Activated CD8-positive, alpha-beta T cell treated with anti-CD3 and anti-CD28 coated beads for 36 hours (primary cell): ENCODE measurements at regions of chr1 and their contacts with region 1.

Region 1: DNA sequence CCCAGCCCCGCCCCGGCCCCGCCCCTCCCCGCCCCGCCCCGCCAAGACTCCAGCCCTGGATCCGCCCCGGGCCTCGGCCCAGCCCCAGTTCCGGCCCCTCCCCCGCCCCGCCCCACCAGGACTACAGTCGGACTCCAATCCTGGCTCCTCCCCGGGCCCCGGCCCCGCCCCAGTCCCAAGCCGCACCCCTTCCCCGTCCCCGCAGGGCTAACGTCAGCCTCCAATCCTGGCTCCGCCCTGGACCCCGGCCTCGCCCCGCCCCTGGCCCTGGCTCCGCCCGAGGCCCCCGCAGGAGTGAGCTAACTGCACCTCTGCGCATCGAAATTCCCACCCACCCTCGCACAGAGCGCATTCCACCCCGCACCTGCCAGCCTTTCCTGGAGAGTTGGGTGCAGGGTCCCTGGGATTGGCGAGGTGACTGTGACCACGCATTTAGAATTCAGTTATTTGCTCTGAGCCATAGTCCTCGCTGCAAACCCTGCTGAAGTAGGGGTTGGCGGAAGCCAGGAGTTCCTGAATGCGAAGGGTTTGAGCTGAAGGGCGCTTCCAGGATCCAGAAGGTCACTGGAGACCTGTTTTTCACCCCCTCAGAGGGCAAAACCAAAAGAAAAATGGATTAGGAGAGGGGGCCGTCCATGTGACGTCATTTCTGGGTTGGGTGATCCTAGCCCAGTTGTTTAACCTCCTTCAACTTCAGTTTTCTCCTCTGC is 588 bp upstream of the IGSF8 start:
- DNase-seq: peak; percentile 99
- ATAC-seq: peak; percentile 89
- H3K4me3 Mint-ChIP-seq: peak overlapping the region; percentile 69
- H3K27ac Mint-ChIP-seq: peak overlapping the region; percentile 89
- H3K4me1 Mint-ChIP-seq: peaks cover 70% of the 10 kb centered on the region
- H3K27me3 Mint-ChIP-seq: no peaks in the 10 kb centered on the region
- CTCF ChIP-seq: no peak

Region 2: DNA sequence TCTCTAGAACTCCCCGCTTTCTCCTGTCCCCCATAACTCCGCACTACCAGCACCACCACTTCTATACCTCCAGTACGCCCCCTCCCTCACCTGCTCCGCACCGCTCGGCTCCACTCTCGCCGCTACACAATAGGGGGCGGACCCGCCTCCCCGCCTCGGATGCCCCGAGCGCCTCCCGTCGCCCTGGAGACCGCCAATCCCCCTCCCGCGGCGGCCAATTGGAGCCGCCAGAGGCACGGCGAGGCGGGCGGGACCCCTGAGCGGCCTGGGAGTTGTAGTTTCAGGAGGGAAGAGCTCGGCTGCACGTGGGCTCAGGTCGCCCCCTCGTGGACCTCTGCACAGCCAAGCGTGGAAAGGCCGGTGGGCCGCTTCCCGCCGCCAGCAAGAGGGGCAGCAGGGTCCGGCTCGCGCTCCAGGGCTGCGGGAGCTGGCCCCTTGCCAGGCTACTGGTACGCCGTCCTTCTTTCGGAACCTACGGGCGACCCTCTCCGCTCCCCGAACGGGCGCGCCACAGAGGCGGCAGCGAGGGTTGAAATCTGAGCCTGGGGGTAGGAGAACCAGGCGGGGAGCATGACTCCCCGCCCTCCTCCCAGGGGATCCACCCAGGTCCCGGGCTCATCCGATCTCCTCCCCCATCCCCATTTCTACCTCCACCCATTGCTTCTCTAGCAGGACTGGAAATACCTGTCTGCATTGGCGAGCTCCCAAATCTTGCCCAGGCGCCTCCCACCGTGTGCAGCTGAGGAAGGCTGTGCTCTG is 153.3 kb before region 1 on chr1 and contains the start of gene IGSF9:
- CTCF ChIA-PET with region 1: no interaction called
- POLR2A ChIA-PET with region 1: no interaction called
- intact Hi-C with region 1: no loop called
- DNase-seq: peak; percentile 86
- ATAC-seq: peak; percentile 99
- H3K4me3 Mint-ChIP-seq: peak within 1 kb of the TSS; percentile 48
- H3K27ac Mint-ChIP-seq: no peak within 1 kb of the TSS
- H3K4me1 Mint-ChIP-seq: peaks cover 2% of the 10 kb centered on the region
- H3K27me3 Mint-ChIP-seq: peaks cover 22% of the 10 kb centered on the region
- CTCF ChIP-seq: peak; percentile 57
- total RNA-seq, gene IGSF9: 0.07 TPM in 1 of 2 experiments, not detected in the other

Region 3: GRCh38 chr1:160078512-160079195 is 20.4 kb before region 1 on chr1:
- CTCF ChIA-PET with region 1: interaction called, 119 read pairs
- POLR2A ChIA-PET with region 1: interaction called, 3 read pairs
- intact Hi-C with region 1: no loop called
- DNase-seq: peak; percentile 86
- ATAC-seq: peak; percentile 97
- H3K4me3 Mint-ChIP-seq: no peak overlapping the region
- H3K27ac Mint-ChIP-seq: no peak overlapping the region
- H3K4me1 Mint-ChIP-seq: peaks cover 13% of the 10 kb centered on the region
- H3K27me3 Mint-ChIP-seq: peaks cover 50% of the 10 kb centered on the region
- CTCF ChIP-seq: peak; percentile 87

Region 4: GRCh38 chr1:160108888-160109662 is 10.1 kb after region 1 on chr1:
- CTCF ChIA-PET with region 1: interaction called, 12 read pairs
- POLR2A ChIA-PET with region 1: interaction called, 3 read pairs
- intact Hi-C with region 1: no loop called
- DNase-seq: peak; percentile 69
- ATAC-seq: peak; percentile 74
- H3K4me3 Mint-ChIP-seq: no peak overlapping the region
- H3K27ac Mint-ChIP-seq: peak overlapping the region; percentile 84
- H3K4me1 Mint-ChIP-seq: peaks cover 6% of the 10 kb centered on the region
- H3K27me3 Mint-ChIP-seq: peaks cover 4% of the 10 kb centered on the region
- CTCF ChIP-seq: peak; percentile 54

Region 5: DNA sequence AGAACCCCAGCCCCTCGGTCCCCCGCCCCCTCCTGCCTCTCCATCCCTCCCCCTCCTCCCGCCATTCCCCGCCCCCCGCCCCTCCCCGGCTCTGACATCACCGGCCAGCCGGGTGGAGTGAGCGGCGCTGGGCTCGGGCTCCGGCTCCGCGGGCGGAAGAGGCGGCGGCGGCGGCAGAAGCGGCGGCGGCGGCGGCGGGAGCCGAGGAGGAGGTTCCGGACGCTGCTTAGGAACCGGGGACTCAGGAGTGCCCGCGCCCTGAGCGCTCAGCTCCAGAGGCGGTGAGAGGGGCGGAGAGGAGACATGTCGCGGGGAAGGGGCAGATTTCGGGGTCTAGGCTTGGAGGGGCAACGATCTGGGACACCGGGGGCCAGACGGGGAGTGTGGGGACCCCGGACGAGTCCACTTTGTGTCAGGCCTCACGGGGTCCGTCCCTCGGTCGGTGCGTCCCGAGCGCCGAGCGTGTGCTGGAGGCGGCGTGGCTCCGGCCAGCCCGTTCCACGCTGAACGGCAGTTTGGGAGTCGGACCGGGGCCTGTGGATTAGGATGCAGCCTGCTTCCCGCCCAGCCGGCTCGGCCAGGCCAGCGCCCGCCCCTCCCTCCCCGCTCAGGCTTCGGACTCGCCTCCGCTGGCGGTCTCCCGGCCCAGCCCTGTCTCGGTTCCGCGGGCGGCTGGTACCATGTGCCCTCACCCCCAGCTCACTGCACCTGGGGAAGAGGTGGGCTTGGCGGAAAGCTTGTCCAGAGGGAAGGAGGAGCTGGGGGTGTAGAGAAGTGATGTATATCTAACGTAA is 106.4 kb after region 1 on chr1 and contains the start of gene PEA15:
- CTCF ChIA-PET with region 1: interaction called, 9 read pairs
- POLR2A ChIA-PET with region 1: no interaction called
- intact Hi-C with region 1: loop called (anchors 5 kb)
- DNase-seq: peak; percentile 70
- ATAC-seq: peak; percentile 76
- H3K4me3 Mint-ChIP-seq: peak within 1 kb of the TSS; percentile 82
- H3K27ac Mint-ChIP-seq: peak within 1 kb of the TSS; percentile 87
- H3K4me1 Mint-ChIP-seq: peaks cover 48% of the 10 kb centered on the region
- H3K27me3 Mint-ChIP-seq: no peaks in the 10 kb centered on the region
- CTCF ChIP-seq: no peak
- total RNA-seq, gene PEA15: 31.8 to 34.1 TPM

Region 6: GRCh38 chr1:160251687-160252526 is 152.9 kb after region 1 on chr1:
- CTCF ChIA-PET with region 1: interaction called, 45 read pairs
- POLR2A ChIA-PET with region 1: interaction called, 5 read pairs
- intact Hi-C with region 1: loop called (anchors 10 kb)
- DNase-seq: peak; percentile 69
- ATAC-seq: peak; percentile 97
- H3K4me3 Mint-ChIP-seq: no peak overlapping the region
- H3K27ac Mint-ChIP-seq: peak overlapping the region; percentile 14
- H3K4me1 Mint-ChIP-seq: peaks cover 16% of the 10 kb centered on the region
- H3K27me3 Mint-ChIP-seq: no peaks in the 10 kb centered on the region
- CTCF ChIP-seq: peak; percentile 69

Region 7: DNA sequence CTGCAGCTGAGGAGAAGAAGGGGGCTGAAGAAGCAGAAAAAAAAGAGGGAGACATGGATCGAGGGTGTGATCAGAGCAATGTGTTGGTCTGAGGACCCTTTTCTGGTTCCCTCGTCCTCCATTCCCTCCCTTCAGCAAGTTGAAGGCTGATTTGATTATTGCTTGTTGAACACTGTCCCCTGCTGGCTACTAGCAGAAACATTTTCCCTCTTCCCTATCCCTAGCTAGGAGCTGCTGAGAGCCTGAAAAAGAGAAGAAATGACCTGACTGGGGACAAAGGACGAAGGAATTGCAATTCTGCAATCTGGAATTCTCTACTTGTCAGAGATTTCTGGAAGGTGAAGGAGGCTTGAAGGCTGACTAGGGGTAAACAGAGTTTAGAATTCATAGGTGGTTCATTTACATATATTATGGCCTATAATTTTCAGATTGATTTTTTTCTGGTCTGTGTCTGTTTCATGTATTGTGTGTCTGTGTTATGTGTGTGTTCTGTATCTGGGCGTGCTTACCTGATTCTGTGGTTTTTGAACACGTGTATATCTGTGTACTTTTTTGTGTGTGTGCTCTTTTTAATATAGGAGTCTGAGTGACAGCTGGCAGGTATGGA is 277.6 kb after region 1 on chr1:
- CTCF ChIA-PET with region 1: interaction called, 27 read pairs
- POLR2A ChIA-PET with region 1: no interaction called
- intact Hi-C with region 1: no loop called
- DNase-seq: peak; percentile 41
- ATAC-seq: peak; percentile 85
- H3K4me3 Mint-ChIP-seq: no peak overlapping the region
- H3K27ac Mint-ChIP-seq: no peak overlapping the region
- H3K4me1 Mint-ChIP-seq: peaks cover 11% of the 10 kb centered on the region
- H3K27me3 Mint-ChIP-seq: no peaks in the 10 kb centered on the region
- CTCF ChIP-seq: peak; percentile 95